ENCODE measurements at regions of chr17 and their contacts with region 1.

Region 1: DNA sequence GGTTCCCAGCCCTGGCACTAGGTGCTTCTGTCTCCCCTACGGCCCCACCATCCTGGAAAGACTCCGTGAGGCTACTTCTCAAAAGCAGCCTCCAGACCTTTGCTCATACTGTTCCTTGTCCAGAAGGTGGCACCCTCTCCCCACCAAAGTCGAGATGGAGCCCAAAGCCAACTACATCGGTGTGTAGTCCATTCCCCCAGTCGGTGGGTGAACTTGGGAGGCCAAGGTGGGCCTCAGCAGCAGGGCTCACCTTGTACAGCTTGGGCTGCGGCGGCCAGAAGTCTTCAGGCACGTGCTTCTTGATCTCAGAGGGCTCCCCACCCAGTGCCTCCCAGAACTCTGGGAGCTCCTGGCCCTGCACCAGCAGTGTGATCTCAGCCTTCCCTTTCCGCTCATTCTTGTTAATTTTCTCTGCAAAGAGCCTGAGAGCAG is 10.2 kb downstream of the FLII start:
- DNase-seq: peak; percentile 57 to 79 (median 68)
- ATAC-seq: peak; percentile 89
- H3K4me3 ChIP-seq: no peak overlapping the region
- H3K27ac ChIP-seq: no peak overlapping the region
- H3K4me1 ChIP-seq: peaks cover 3 to 28% of the 10 kb centered on the region in 2 experiments; a peak in 4 of 5 replicates
- H3K27me3 ChIP-seq: no peaks in the 10 kb centered on the region
- CTCF ChIP-seq: peak; percentile 69 to 83 (median 70)
- EP300 ChIP-seq: no peak
- POLR2A ChIP-seq: no peak
- RAD21 ChIP-seq: peak; percentile 52 to 73; a peak in 3 of 4 replicates

Region 2: GRCh38 chr17:18314731-18315561 is 66.6 kb after region 1 on chr17 and contains the starts of genes SMCR8 and TOP3A:
- CTCF ChIA-PET with region 1: no interaction called
- POLR2A ChIA-PET with region 1: no interaction called
- in situ Hi-C with region 1: no loop called
- intact Hi-C with region 1: loop called (anchors 5 kb)
- DNase-seq: peak; percentile 75 to 95 (median 82)
- ATAC-seq: peak; percentile 95
- H3K4me3 ChIP-seq: peak within 1 kb of the TSS; percentile 75
- H3K27ac ChIP-seq: peak within 1 kb of the TSS; percentile 85
- H3K4me1 ChIP-seq: peaks cover 17 to 26% of the 10 kb centered on the region in 2 experiments
- H3K27me3 ChIP-seq: no peaks in the 10 kb centered on the region
- CTCF ChIP-seq: no peak
- EP300 ChIP-seq: no peak
- POLR2A ChIP-seq: peak; percentile 75
- RAD21 ChIP-seq: no peak
- polyA plus RNA-seq, gene SMCR8: 0.25 to 0.37 TPM
- polyA plus RNA-seq, gene TOP3A: 5.2 to 7.6 TPM